ENCODE measurements at regions of chr1 and their contacts with region 1.

Region 1: DNA sequence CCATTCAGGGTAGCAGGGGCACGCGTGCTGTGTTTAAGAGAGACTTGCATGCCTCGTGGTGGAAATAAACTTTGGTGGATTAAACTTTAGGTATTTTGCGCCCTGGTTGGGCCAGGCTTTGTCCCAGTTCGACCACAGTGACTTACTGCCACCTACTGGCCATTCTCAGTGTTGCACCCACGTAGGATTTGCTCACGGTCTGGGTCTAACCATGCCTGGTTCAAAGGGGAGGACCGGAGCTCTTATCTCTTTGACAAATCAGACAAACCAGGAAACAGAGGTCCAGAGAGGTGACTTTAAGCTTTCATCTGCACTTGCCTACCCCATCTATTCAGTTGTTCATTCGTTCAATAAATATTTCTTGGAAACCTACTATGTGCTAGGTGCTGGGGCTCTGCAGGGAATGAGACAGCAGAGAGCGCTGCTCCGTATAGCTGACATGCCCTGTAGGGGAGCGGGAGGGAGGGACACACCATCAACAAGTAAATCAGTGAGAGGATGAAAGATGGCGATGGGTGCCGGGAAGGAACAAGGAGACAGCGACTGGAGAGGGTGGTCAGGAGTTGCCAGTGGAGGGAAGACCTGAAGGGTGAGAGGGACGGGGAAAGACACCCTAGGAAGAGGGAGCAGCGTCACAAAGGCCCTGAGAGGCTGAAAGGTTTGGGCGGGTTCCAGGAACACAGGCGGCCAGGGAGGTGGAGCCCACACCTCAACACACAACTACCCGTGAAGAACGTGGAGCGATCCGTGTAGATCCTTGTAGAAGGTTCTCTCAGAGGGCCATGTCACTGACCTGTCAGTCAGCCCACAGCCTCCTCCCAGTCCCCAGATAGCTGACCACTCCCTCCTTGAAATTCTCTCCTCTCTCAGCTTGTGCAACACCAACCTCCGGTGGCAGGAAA is 27.2 kb upstream of the TINAGL1 start:
- ATAC-seq: peak; percentile 84 to 98 (median 95)
- H3K4me3 ChIP-seq: peak overlapping the region in 3 of 5 donors; percentile 0 to 12 (median 10)
- H3K27ac ChIP-seq: peak overlapping the region in 1 of 2 donors; percentile 25
- H3K4me1 ChIP-seq: peaks cover 0 to 8% of the 10 kb centered on the region in 2 donors

Region 2: GRCh38 chr1:30700528-30701257 is 848.5 kb before region 1 on chr1:
- in situ Hi-C with region 1: no loop called
- ATAC-seq: peak; percentile 36 to 94 (median 84)
- H3K4me3 ChIP-seq: no peak overlapping the region
- H3K27ac ChIP-seq: peak overlapping the region in 1 of 2 donors; percentile 60
- H3K4me1 ChIP-seq: peaks cover 0 to 23% of the 10 kb centered on the region in 2 donors

Region 3: GRCh38 chr1:31155216-31155841 is 393.8 kb before region 1 on chr1:
- in situ Hi-C with region 1: loop called in 1 of 9 experiments (anchors 25 kb)
- ATAC-seq: peak; percentile 54 to 80 (median 72)
- H3K4me3 ChIP-seq: peak overlapping the region; percentile 69 to 89 (median 82)
- H3K27ac ChIP-seq: peak overlapping the region; percentile 72 to 92
- H3K4me1 ChIP-seq: peaks cover 12% of the 10 kb centered on the region in 2 donors

Region 4: GRCh38 chr1:31216016-31216415 is 333.1 kb before region 1 on chr1:
- in situ Hi-C with region 1: no loop called
- ATAC-seq: peak in 7 of 8 experiments; percentile 26 to 87 (median 80)
- H3K4me3 ChIP-seq: no peak overlapping the region
- H3K27ac ChIP-seq: peak overlapping the region; percentile 0 to 17
- H3K4me1 ChIP-seq: peaks cover 46 to 47% of the 10 kb centered on the region in 2 donors

Region 5: GRCh38 chr1:31381394-31382287 is 167.5 kb before region 1 on chr1:
- in situ Hi-C with region 1: loop called in 1 of 9 experiments (anchors 10 kb)
- ATAC-seq: peak in 1 of 8 experiments; percentile 6
- H3K4me3 ChIP-seq: no peak overlapping the region
- H3K27ac ChIP-seq: no peak overlapping the region
- H3K4me1 ChIP-seq: peaks cover 9 to 10% of the 10 kb centered on the region in 2 donors

Region 6: GRCh38 chr1:31476891-31477828 is 72.0 kb before region 1 on chr1:
- in situ Hi-C with region 1: no loop called
- ATAC-seq: peak in 5 of 8 experiments; percentile 60 to 78 (median 74)
- H3K4me3 ChIP-seq: no peak overlapping the region
- H3K27ac ChIP-seq: no peak overlapping the region
- H3K4me1 ChIP-seq: peaks cover 9% of the 10 kb centered on the region in 2 donors

Region 7: DNA sequence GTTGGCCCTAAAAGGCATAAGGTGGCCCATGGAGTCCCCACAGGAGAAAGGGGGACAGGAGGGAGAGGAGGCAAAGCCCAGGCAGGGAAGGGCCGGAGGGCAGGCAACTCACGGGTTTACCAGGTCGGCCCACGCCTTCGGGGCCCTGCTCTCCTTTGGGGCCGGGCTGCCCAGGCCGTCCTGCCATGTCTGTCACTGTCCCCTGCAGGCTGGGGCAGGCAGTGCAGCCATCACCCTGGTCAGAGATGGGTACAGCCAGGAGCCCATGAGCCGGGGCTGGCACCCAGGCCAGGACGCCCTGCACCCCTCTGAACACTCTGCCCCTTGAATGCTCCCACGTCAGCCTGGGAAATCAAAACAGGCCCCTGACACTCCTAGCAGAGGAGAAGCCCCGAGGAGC is 134.8 kb after region 1 on chr1:
- in situ Hi-C with region 1: no loop called
- ATAC-seq: peak in 2 of 8 experiments; percentile 21 to 56
- H3K4me3 ChIP-seq: no peak overlapping the region
- H3K27ac ChIP-seq: no peak overlapping the region
- H3K4me1 ChIP-seq: no peaks in the 10 kb centered on the region